Activated CD8-positive, alpha-beta T cell treated with anti-CD3 and anti-CD28 coated beads, Interleukin-2, amount 10 ng/mL, durations not matched to agents 7 days and 5 days (primary cell): ENCODE measurements at regions of chr6 and their contacts with region 1.

Region 1: DNA sequence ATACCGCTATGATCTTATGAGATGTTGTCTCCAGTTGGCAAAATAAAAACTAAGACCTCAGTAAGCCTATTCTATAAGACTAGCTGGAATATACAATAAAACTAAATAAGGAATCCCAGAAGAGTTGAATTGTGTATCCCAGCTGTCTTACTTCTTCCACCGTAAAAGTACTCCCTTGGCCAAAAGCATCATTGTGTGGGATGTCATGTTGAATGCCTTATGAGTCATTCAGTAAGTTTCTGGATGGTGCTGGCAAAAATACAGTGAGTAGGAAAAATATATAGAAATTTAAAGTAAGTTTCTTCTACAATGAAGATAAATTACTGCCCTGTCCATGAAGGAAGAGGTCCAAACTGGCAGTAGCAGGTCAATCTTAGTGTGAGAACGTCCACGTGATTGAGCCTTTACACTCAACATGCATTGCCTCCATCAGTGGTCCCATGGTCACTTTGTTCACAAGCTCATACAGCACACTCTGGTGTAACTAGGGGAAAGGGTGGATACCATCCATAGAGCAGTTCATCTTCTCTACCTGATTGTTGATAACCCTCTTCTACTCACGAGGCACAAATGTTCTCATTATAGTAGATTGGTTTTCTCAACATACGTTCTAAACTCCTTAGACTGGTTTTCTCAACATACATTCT is 13.7 kb upstream of the ZNF318 start:
- DNase-seq: no peak
- ATAC-seq: no peak
- H3K4me3 Mint-ChIP-seq: peak overlapping the region; percentile 50
- H3K27ac Mint-ChIP-seq: peak overlapping the region; percentile 91
- H3K4me1 Mint-ChIP-seq: peaks cover 44% of the 10 kb centered on the region
- H3K27me3 Mint-ChIP-seq: peaks cover 48% of the 10 kb centered on the region

Region 2: DNA sequence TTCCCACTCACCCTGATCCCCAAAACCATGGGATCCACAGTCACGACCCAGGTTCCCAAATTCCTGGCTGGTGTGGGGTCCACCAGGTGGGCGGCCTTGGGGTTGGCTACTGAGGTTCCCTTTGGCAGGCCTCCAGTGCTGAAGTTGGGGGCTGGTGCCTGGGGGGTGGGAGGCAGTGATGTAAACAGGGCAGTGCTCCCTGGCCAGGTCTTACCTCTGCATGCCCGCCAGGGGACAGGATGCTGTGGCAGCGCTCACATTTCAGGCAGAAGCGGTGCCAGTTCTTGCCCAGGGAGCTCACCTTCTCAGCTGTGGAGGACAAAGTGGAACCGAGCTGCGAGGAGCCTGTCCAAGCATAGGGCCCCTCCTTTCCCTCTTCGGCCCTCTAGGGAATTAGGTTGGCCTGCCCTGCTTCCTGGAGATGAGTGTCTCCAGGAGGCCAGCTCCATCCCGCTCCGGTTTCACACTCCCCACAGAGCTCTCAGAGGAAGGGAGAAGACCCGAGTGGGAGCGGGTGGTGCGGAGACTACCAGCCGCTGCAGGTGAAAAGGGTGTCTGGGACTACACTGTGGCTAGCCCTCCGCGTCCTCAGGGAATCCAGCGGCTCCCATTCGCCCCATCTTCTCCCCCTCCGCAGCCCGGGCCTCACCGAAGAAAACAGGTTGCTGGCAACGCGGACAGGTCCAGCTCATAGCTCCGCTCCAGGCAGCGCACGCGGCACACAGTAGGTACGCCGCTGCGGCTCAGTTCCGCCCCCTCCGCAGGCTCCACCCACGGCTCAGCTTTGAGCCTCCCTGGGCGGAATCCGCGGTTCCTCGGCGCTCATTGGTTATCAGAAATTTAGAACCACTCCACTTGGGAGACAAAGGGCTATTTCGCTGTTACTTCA is 74.8 kb before region 1 on chr6 and contains the start of gene CRIP3:
- CTCF ChIA-PET with region 1: interaction called, 15 read pairs
- POLR2A ChIA-PET with region 1: no interaction called
- DNase-seq: peak; percentile 53
- ATAC-seq: peak; percentile 89
- H3K4me3 Mint-ChIP-seq: peak within 1 kb of the TSS; percentile 63
- H3K27ac Mint-ChIP-seq: no peak within 1 kb of the TSS
- H3K4me1 Mint-ChIP-seq: peaks cover 12% of the 10 kb centered on the region
- H3K27me3 Mint-ChIP-seq: peaks cover 14% of the 10 kb centered on the region
- total RNA-seq, gene CRIP3: not detected

Region 3: GRCh38 chr6:43369174-43370022 is 13.7 kb before region 1 on chr6 and contains the start of gene ZNF318:
- CTCF ChIA-PET with region 1: interaction called, 10 read pairs
- POLR2A ChIA-PET with region 1: interaction called, 24 read pairs
- DNase-seq: peak; percentile 95
- ATAC-seq: peak; percentile 96
- H3K4me3 Mint-ChIP-seq: peak within 1 kb of the TSS; percentile 83
- H3K27ac Mint-ChIP-seq: peak within 1 kb of the TSS; percentile 92
- H3K4me1 Mint-ChIP-seq: peaks cover 32% of the 10 kb centered on the region
- H3K27me3 Mint-ChIP-seq: peaks cover 25% of the 10 kb centered on the region
- total RNA-seq, gene ZNF318: 6.7 to 7.0 TPM

Region 4: DNA sequence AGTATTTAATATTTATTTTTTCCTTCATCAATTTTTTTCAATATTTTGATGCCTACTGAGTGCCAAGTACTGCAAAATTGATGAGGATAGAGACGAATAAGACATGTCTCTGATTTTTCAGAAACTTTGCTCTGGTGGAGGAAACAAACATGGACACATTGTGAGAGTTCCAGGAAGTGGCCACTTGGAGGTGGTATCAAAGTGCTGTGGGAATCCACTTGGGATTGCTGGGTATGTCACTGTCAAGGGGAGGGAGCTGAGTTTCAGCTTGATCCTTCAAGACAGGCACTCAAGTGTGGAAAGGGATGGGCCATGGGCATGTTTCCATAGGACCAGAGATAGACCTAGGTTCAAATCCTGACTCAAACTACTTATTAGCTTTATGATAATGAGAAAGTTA is 19.7 kb after region 1 on chr6:
- CTCF ChIA-PET with region 1: interaction called, 19 read pairs
- POLR2A ChIA-PET with region 1: no interaction called
- DNase-seq: no peak
- ATAC-seq: no peak
- H3K4me3 Mint-ChIP-seq: no peak overlapping the region
- H3K27ac Mint-ChIP-seq: no peak overlapping the region
- H3K4me1 Mint-ChIP-seq: peaks cover 1% of the 10 kb centered on the region
- H3K27me3 Mint-ChIP-seq: peaks cover 44% of the 10 kb centered on the region

Region 5: GRCh38 chr6:43496370-43497128 is 113.4 kb after region 1 on chr6:
- CTCF ChIA-PET with region 1: no interaction called
- POLR2A ChIA-PET with region 1: no interaction called
- DNase-seq: no peak
- ATAC-seq: no peak
- H3K4me3 Mint-ChIP-seq: no peak overlapping the region
- H3K27ac Mint-ChIP-seq: no peak overlapping the region
- H3K4me1 Mint-ChIP-seq: peaks cover 20% of the 10 kb centered on the region
- H3K27me3 Mint-ChIP-seq: no peaks in the 10 kb centered on the region